ENCODE measurements at regions of chr7 and their contacts with region 1.

Region 1: DNA sequence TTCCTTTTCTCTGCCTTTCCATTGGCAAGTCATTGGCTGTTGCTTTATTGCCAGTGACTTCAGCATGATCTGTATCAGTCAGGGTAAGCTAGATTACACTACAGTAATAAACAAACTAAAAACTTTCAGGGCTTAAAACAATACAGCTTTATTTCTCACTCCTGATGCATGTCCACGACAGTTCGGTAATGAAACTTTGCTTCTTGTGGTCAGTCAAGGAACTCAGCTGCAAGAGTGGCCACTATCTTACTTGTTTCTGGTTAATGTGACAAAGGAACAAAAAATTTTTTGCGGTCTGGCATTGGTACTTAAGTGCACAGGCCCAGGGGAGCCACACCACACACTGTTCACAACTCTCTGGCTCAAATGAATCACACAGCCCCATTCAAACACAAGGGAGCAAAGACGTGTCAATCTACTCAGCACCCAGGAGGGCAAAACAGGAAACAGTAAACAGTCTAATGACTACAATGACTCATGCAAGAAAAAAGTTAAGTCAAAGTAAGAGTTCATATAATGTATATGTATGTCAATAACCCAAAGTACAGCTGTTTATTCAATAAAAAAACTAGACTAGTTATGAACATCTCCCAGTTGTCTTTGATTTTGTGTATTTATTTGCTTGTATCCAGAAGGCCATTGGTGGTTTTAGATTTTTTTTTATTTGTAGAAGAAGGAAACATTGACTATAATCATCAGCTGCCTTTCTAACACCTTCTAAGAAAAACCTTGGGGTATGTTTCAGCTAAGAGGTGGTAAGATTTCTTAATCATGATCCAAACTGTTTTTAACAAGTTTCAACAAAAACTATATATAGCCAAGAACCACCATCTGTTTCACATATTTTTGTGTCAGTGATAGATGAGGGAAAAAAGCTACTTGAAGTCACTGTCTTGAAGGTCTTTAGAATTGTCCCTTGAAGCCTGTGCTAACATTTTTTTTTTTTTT is 134.4 kb upstream of the FAM3C start:
- DNase-seq: peak; percentile 84
- ATAC-seq: peak; percentile 97
- H3K4me3 Mint-ChIP-seq: peak overlapping the region; percentile 17
- H3K27ac Mint-ChIP-seq: peak overlapping the region; percentile 91
- H3K4me1 Mint-ChIP-seq: peaks cover 37% of the 10 kb centered on the region
- H3K27me3 Mint-ChIP-seq: peaks cover 11% of the 10 kb centered on the region
- CTCF ChIP-seq: no peak

Region 2: DNA sequence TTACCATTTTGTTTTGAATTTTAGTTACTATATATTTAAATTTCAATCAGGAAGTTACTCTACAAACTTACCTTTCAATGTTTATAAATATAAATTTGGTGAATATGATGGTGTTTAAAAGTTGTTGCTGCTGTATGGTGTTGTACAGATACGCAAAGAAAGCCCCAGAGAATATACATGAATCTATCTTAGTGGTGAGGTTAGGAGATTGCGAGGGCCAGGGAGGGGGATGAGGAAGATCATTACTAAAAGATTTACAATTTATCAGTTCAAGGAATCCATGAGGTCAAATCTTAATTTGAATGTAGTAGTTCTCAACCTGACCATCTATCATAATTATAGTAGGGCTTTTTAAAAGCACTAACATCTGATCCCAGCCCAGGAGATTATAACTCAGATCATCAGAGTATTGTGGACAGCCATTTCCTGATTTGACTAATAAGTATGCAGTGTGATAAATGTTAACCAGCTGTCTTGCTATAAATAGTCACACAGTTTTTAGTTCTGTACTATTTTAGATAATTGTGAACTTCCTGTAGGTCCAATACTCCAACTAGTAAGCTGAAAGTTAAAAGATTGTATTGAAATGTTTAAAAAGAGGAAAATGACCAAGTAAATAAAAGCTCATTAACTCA is 158.0 kb before region 1 on chr7:
- CTCF ChIA-PET with region 1: interaction called, 5 read pairs
- POLR2A ChIA-PET with region 1: no interaction called
- intact Hi-C with region 1: loop called (anchors 5 kb)
- DNase-seq: peak; percentile 13
- ATAC-seq: peak; percentile 81
- H3K4me3 Mint-ChIP-seq: peak overlapping the region; percentile 34
- H3K27ac Mint-ChIP-seq: peak overlapping the region; percentile 88
- H3K4me1 Mint-ChIP-seq: peaks cover 48% of the 10 kb centered on the region
- H3K27me3 Mint-ChIP-seq: no peaks in the 10 kb centered on the region
- CTCF ChIP-seq: no peak

Region 3: DNA sequence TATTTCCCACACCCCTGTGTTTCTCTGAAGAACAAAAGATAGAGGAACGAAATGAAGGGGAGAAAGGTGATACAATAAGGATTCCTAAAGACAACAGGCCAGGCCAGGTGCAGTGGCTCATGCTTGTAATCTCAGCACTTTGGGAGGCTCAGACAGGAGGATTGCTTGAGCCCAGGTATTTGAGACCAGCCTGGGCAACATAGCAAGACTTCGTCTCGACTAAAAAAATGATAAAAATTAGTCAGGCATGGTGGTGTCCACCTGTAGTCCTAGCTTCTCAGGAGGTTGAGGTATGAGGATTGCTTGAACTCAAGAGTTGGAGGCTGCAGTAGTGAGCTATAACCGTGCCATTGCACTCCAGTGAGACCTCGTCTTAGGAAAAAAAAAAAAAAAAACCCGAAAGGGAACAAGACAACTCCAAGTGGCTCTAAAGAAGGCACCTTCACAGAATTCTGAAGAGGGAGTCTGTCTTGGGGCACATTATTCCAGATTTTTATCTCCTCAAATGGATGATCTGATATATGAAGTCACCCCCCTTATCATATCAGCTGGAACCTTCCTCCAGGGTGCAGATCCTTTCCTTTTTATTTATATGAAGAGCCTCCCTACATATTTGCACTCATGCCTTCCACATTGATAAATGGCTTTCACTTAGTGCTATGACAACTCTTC is 92.9 kb before region 1 on chr7:
- CTCF ChIA-PET with region 1: no interaction called
- POLR2A ChIA-PET with region 1: no interaction called
- intact Hi-C with region 1: loop called (anchors 5 kb)
- DNase-seq: no peak
- ATAC-seq: no peak
- H3K4me3 Mint-ChIP-seq: peak overlapping the region; percentile 50
- H3K27ac Mint-ChIP-seq: peak overlapping the region; percentile 89
- H3K4me1 Mint-ChIP-seq: peaks cover 36% of the 10 kb centered on the region
- H3K27me3 Mint-ChIP-seq: no peaks in the 10 kb centered on the region
- CTCF ChIP-seq: no peak